ENCODE measurements at regions of chr9 and their contacts with region 1.

Region 1: DNA sequence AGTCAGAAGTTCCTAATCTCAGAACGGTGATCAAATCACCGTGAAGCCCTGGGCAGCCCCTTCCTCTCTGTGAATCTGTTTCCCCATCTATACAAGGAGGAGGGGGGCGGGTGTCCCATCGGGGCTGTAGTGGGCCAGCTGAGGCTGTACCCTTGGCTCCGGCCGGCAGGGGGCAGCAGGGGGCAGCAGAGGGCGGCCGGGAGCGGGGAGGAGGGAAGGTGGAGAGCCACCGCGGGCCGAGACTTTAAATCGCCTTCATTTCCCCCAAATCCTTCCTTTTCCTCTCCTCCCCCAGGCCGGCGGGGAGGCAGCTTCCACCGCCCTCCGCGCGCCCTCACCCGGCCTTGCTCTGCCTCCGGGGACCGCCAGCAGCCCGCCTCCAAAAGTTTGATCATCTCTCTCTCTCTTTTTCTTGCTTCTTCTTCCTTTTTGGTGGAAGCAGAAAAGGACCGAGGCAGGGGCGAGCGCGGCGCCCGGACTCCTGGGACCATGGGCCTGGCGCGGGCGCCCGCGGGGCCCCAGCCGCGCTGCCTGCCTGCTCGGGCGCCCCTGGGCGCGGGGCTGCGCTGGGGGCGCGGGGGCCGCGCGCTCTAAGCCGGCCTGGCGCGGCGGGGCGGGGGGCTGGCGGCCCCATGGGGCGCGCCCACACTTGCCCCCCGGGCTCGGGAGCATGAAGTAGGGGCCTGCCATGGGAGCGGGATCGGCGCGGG is at the start of gene COL27A1:
- DNase-seq: peak; percentile 53 to 73
- ATAC-seq: peak; percentile 83
- H3K4me3 ChIP-seq: peak within 1 kb of the TSS; percentile 57 to 68 (median 62)
- H3K27ac ChIP-seq: peak within 1 kb of the TSS; percentile 56 to 71 (median 64)
- H3K4me1 ChIP-seq: peaks cover 4 to 16% of the 10 kb centered on the region in 2 donors
- H3K27me3 ChIP-seq: peaks cover 12 to 17% (median 14%) of the 10 kb centered on the region in 3 donors
- CTCF ChIP-seq: peak; percentile 87 to 98 (median 96)
- POLR2A ChIP-seq: no peak
- total RNA-seq, gene COL27A1: 0.42 to 1.4 (median 0.95) TPM

Region 2: DNA sequence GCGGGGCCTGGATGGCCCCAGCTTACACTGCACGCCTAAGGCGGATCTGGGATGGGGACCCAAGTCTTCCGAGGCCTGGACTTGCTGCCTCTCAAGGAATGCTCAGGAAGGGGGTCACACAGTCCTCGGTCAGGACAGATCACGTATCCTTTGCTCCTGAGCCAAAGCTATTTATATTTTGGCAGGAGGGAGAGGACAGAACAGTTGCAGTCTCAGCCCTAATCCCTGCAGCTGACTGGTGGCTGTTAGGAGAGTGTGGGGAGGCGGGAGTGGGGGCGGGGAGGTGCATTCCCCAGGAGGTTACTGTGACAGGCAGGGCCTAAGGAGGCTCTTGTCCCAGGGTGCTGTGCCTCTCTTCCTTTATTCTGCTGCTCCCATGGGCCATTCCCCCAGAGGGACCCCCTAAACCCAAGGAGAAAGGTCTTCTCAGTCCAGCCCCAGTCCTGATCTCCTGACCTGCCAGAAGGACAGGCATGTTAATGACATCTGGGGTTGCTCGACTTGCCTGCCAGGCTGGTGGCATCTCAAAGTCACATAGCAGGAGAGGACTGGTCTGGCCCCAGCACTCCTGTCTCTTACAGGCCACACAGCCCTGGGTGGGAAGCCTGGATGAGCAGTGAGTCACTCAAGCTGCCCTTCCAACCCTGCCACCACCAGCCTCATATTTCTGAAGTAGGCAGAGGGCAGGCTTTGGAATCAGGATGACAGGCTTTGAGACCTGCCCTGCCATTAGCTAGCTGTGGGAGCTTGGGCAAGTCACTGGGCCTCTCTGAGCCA is 51.8 kb after region 1 on chr9:
- in situ Hi-C with region 1: no loop called
- intact Hi-C with region 1: loop called (anchors 2 kb)
- DNase-seq: peak; percentile 89 to 95
- ATAC-seq: peak; percentile 87 to 91
- H3K4me3 ChIP-seq: no peak overlapping the region
- H3K27ac ChIP-seq: peak overlapping the region; percentile 87 to 95 (median 93)
- H3K4me1 ChIP-seq: peaks cover 38 to 53% of the 10 kb centered on the region in 2 donors
- H3K27me3 ChIP-seq: no peaks in the 10 kb centered on the region
- CTCF ChIP-seq: no peak
- POLR2A ChIP-seq: peak in 1 of 2 donors; percentile 14

Region 3: GRCh38 chr9:114271641-114272081 is 116.2 kb after region 1 on chr9:
- in situ Hi-C with region 1: loop called in 2 of 4 experiments (anchors 5 to 10 kb)
- intact Hi-C with region 1: loop called (anchors 1 kb)
- DNase-seq: peak; percentile 27 to 57
- ATAC-seq: peak; percentile 70 to 82
- H3K4me3 ChIP-seq: no peak overlapping the region
- H3K27ac ChIP-seq: no peak overlapping the region
- H3K4me1 ChIP-seq: peaks cover under 1 to 2% of the 10 kb centered on the region in 2 donors
- H3K27me3 ChIP-seq: no peaks in the 10 kb centered on the region
- CTCF ChIP-seq: peak; percentile 47 to 74 (median 63)
- POLR2A ChIP-seq: no peak

Region 4: GRCh38 chr9:114282926-114283325 is 127.5 kb after region 1 on chr9:
- in situ Hi-C with region 1: loop called in 3 of 4 experiments (anchors 10 kb)
- intact Hi-C with region 1: no loop called
- DNase-seq: no peak
- ATAC-seq: no peak
- H3K4me3 ChIP-seq: no peak overlapping the region
- H3K27ac ChIP-seq: no peak overlapping the region
- H3K4me1 ChIP-seq: no peaks in the 10 kb centered on the region
- H3K27me3 ChIP-seq: no peaks in the 10 kb centered on the region
- CTCF ChIP-seq: no peak
- POLR2A ChIP-seq: no peak

Region 5: GRCh38 chr9:114291064-114291474 is 135.7 kb after region 1 on chr9:
- in situ Hi-C with region 1: loop called in 2 of 4 experiments (anchors 10 kb)
- intact Hi-C with region 1: loop called (anchors 1 kb)
- DNase-seq: peak; percentile 31 to 56
- ATAC-seq: peak; percentile 69 to 75
- H3K4me3 ChIP-seq: no peak overlapping the region
- H3K27ac ChIP-seq: no peak overlapping the region
- H3K4me1 ChIP-seq: no peaks in the 10 kb centered on the region
- H3K27me3 ChIP-seq: no peaks in the 10 kb centered on the region
- CTCF ChIP-seq: peak; percentile 84 to 96 (median 93)
- POLR2A ChIP-seq: no peak